ENCODE measurements at regions of chr1 and their contacts with region 1.

Region 1: DNA sequence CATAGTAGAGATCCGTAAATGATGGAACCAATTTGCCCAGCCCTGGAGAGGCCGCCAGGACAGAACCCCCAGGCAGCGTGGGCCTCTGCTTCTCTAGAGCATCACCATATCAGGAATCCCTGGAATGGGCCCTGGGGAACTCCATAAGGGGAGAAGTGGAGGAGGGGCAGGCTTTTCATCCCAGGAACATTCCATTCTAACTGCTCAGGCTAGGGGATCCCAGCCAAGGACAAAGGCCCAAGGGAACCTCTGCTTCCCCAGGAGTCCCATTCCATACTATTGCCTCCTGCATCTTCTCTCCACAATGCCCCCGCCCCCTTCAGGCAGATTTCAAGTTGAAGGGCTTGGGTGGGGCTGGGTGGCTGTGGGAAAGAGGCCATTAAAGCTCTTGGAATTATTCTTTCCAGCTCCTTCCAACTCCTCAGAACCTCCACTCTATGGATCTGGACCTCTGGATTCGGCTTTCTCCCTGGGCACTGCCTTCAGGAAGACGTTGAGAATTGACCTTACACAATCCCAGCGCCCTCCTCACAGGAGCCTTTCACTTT is 6.0 kb downstream of the TRNP1 start:
- DNase-seq: peak; percentile 72
- H3K4me3 ChIP-seq: no peak overlapping the region
- H3K27ac ChIP-seq: peak overlapping the region; percentile 68 to 77
- H3K4me1 ChIP-seq: peaks cover 3% of the 10 kb centered on the region
- H3K27me3 ChIP-seq: no peaks in the 10 kb centered on the region
- CTCF ChIP-seq: no peak
- POLR2A ChIP-seq: no peak

Region 2: DNA sequence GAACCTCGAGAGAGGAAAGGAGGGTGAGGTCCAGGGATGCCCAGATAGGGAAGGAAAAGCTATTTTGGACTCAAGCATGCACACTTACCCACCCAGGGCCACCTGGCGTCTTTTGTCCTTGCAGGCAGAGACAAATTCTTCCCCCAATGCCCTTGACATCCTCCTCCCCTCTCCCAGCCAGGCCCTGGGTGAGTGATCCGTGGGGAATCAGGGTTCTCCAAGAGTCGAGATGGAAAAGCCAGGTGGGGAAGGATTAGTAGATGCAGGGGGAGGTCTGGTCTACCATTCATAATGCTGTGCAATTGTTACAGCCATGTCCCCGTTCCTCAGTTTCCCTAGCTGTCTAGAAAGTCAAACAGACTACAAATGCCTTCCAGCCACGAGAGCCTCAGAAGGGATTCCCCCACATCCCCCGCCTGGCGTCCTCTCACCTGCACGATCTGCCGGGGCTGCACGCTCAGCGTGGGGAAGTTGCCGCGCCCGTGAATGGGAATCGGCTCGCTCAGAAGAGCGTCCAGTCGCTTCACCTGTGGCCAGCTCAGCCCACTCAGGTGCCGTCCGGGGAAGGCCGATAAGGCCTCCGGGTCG is 12.6 kb after region 1 on chr1:
- intact Hi-C with region 1: loop called (anchors 2 kb)
- DNase-seq: no peak
- H3K4me3 ChIP-seq: peak overlapping the region; percentile 34
- H3K27ac ChIP-seq: peak overlapping the region; percentile 77 to 80
- H3K4me1 ChIP-seq: peaks cover 14% of the 10 kb centered on the region
- H3K27me3 ChIP-seq: no peaks in the 10 kb centered on the region
- CTCF ChIP-seq: no peak
- POLR2A ChIP-seq: no peak

Region 3: DNA sequence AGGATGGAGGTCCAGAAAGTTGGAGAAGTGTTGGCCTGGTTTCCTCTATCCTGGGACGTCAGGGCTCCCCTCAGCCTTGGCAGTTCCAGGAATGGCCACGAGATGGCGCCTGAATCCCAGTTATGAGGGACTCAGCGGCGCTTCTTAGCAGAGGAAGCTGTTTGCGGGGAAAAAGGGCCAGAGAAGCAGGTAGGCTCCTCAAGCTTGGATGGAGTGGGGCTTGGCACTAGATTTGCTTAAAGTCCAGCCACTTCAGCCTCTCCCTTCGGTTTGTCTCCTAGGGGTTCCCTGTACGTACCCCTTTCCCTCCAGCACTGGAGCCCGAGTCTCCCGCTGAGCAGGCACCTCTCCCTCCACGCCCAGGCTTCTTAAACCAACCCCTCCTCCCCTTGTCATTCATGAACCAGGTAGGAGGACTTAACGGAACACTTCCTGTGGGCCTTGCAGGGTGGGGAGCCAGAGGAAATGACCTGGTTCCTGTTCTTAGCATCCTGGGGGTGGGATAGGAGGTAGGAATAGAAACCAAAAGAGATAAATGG is 45.2 kb after region 1 on chr1:
- intact Hi-C with region 1: loop called (anchors 2 kb)
- DNase-seq: peak; percentile 86
- H3K4me3 ChIP-seq: no peak overlapping the region
- H3K27ac ChIP-seq: no peak overlapping the region
- H3K4me1 ChIP-seq: no peaks in the 10 kb centered on the region
- H3K27me3 ChIP-seq: no peaks in the 10 kb centered on the region
- CTCF ChIP-seq: peak; percentile 93 to 99 (median 98)
- POLR2A ChIP-seq: no peak